MCF 10A (cell line): ENCODE measurements at regions of chr1 and their contacts with region 1.

Region 1: DNA sequence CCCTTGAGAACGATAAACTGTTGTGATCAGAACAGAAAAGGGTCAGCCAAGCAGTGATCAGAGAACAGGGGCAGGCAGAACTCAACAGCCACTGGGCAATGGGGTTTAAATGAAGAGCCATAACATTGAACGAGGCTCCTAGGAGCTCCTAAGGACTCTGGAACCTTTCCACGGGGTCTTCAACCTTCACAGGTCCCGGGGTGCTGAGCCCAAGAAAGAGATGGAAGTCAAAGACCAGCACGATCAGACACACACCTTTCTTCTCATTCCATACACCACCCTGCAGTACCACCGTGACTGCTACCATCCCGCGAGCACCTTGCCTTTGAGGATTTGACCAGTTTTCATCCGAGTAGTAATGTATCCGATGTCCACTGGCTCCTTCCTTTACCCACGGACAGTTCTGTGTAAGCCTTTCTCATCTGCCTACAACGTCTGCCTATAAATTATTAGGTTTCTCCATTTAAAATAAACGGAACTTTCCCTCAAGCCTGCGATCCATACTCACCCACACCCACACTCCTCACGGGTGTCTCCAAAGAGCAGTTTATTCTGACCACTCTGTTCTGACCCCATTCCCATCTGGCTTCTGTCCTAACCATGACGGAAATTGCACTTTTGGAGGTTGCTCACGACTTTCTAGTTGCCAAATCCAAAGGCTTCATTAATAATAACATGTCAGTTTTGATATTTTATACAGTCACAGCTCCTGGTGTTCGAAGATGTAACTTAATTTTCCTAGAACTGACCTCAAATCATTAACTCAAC is 16.8 kb upstream of the HHAT start:
- DNase-seq: no peak
- H3K4me3 Mint-ChIP-seq: no peak overlapping the region
- H3K27ac Mint-ChIP-seq: no peak overlapping the region
- H3K4me1 Mint-ChIP-seq: peaks cover 6% of the 10 kb centered on the region
- H3K27me3 Mint-ChIP-seq: peaks cover 36% of the 10 kb centered on the region
- CTCF ChIP-seq: no peak

Region 2: DNA sequence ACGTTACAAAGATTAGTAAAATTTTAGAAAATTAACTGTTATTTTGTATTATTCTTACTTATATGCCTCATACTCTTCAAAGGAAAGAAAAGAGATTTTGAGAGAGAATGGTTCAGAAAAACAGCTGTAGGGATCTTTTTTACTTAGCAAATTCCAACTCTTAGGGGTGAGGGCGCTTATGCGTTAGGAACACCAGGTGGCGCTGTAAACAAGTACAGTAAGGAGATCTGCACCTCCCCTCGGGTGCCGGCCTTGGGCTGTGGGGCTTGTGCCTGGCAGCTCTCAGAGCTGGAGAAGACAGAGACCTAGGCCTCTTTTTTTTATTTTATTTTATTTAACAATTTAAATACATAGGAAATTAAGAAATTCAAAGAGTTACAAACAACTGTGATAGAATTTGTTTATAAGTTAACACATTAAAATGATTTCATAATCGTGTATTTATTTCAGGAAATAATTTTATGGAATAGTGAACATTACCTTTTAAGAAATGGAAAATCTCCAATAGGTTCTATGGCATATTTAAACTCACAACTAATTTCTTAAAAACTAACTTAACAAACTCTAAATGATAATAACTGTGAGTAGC is 451.5 kb before region 1 on chr1:
- CTCF ChIA-PET with region 1: interaction called, 8 read pairs
- POLR2A ChIA-PET with region 1: no interaction called
- intact Hi-C with region 1: loop called (anchors 2 kb)
- DNase-seq: peak; percentile 94
- H3K4me3 Mint-ChIP-seq: no peak overlapping the region
- H3K27ac Mint-ChIP-seq: peak overlapping the region; percentile 73
- H3K4me1 Mint-ChIP-seq: peaks cover 43% of the 10 kb centered on the region
- H3K27me3 Mint-ChIP-seq: no peaks in the 10 kb centered on the region
- CTCF ChIP-seq: peak; percentile 99

Region 3: GRCh38 chr1:210143465-210144062 is 168.3 kb before region 1 on chr1:
- CTCF ChIA-PET with region 1: interaction called, 291 read pairs
- POLR2A ChIA-PET with region 1: interaction called, 9 read pairs
- intact Hi-C with region 1: loop called (anchors 1 kb)
- DNase-seq: peak; percentile 89
- H3K4me3 Mint-ChIP-seq: no peak overlapping the region
- H3K27ac Mint-ChIP-seq: no peak overlapping the region
- H3K4me1 Mint-ChIP-seq: no peaks in the 10 kb centered on the region
- H3K27me3 Mint-ChIP-seq: peaks cover 32% of the 10 kb centered on the region
- CTCF ChIP-seq: peak; percentile 91

Region 4: GRCh38 chr1:210170220-210170619 is 141.7 kb before region 1 on chr1:
- CTCF ChIA-PET with region 1: interaction called, 12 read pairs
- POLR2A ChIA-PET with region 1: interaction called, 3 read pairs
- intact Hi-C with region 1: no loop called
- DNase-seq: no peak
- H3K4me3 Mint-ChIP-seq: no peak overlapping the region
- H3K27ac Mint-ChIP-seq: no peak overlapping the region
- H3K4me1 Mint-ChIP-seq: no peaks in the 10 kb centered on the region
- H3K27me3 Mint-ChIP-seq: peaks cover 42% of the 10 kb centered on the region
- CTCF ChIP-seq: no peak

Region 5: DNA sequence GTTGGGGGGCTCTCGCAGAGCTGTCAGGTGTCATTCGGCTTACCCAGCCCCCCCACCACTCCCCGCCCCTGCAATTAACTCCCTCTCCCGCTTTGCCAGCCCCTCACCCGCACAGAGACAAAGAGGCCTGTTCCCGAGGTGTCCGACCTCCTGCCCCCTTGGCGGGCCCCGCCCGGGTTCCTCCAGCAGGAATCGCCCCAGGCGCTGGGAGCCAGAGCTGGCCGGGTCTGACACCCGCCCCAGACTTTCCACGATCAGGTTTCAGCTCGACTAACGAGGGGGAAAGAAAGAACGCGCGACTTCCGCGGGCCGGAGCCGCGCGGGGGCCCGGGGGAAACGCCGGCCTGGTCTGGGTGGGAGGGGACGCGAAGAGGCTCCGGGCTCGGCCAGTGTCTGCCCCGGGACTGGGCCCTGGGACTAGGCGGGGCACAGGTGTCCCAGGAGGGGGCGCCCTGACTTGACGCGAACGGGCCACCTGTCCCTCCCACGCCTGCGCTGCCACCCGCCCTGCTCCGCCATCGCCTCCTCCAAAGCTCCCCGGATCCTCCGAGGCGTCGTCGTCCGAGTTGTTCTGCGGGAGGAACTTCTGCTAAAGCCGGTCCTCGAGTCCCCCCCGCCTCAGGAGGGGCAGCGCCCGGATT is 19.6 kb before region 1 on chr1:
- CTCF ChIA-PET with region 1: interaction called, 21 read pairs
- POLR2A ChIA-PET with region 1: no interaction called
- intact Hi-C with region 1: no loop called
- DNase-seq: peak; percentile 62
- H3K4me3 Mint-ChIP-seq: peak overlapping the region; percentile 63
- H3K27ac Mint-ChIP-seq: peak overlapping the region; percentile 26
- H3K4me1 Mint-ChIP-seq: peaks cover 5% of the 10 kb centered on the region
- H3K27me3 Mint-ChIP-seq: peaks cover 45% of the 10 kb centered on the region
- CTCF ChIP-seq: peak; percentile 36

Region 6: DNA sequence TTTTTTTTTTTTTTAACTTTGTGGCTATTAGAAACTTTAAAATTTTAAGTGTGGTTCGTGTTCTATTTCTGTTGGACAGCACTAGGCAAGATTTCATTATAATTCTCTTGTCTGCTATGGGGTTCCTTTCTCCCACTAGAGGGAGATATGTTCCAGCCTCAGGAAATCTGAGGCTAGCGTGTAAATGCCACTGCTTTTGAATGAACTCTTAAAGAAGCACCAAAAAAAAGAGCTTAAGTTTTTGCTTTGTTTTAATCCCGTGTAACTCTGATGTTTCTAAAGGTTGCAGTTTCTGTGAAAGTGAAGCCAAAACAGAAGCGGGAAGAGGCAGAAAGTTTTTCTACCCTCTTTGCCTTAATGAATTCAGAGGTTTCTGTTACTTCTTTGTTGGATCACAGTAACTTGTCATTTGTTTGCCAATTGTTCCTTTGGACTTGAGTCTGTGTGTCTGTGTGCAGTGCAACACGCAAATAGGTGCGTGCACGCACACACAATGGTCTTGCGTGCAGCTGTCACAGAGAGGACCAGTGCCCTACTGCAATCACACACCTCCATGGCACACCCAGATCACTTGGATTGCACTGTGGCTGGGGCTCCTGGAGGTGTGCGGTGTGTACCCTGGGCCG is 49.1 kb after region 1 on chr1:
- CTCF ChIA-PET with region 1: interaction called, 8 read pairs
- POLR2A ChIA-PET with region 1: no interaction called
- intact Hi-C with region 1: loop called (anchors 2 kb)
- DNase-seq: peak; percentile 76
- H3K4me3 Mint-ChIP-seq: no peak overlapping the region
- H3K27ac Mint-ChIP-seq: no peak overlapping the region
- H3K4me1 Mint-ChIP-seq: peaks cover 18% of the 10 kb centered on the region
- H3K27me3 Mint-ChIP-seq: no peaks in the 10 kb centered on the region
- CTCF ChIP-seq: peak; percentile 83

Region 7: GRCh38 chr1:210407207-210407886 is 95.4 kb after region 1 on chr1:
- CTCF ChIA-PET with region 1: interaction called, 57 read pairs
- POLR2A ChIA-PET with region 1: no interaction called
- intact Hi-C with region 1: no loop called
- DNase-seq: peak; percentile 84
- H3K4me3 Mint-ChIP-seq: no peak overlapping the region
- H3K27ac Mint-ChIP-seq: no peak overlapping the region
- H3K4me1 Mint-ChIP-seq: no peaks in the 10 kb centered on the region
- H3K27me3 Mint-ChIP-seq: no peaks in the 10 kb centered on the region
- CTCF ChIP-seq: peak; percentile 100